Heart right ventricle (tissue), 16 donors: ENCODE measurements at regions of chr16 and their contacts with region 1.

Region 1: DNA sequence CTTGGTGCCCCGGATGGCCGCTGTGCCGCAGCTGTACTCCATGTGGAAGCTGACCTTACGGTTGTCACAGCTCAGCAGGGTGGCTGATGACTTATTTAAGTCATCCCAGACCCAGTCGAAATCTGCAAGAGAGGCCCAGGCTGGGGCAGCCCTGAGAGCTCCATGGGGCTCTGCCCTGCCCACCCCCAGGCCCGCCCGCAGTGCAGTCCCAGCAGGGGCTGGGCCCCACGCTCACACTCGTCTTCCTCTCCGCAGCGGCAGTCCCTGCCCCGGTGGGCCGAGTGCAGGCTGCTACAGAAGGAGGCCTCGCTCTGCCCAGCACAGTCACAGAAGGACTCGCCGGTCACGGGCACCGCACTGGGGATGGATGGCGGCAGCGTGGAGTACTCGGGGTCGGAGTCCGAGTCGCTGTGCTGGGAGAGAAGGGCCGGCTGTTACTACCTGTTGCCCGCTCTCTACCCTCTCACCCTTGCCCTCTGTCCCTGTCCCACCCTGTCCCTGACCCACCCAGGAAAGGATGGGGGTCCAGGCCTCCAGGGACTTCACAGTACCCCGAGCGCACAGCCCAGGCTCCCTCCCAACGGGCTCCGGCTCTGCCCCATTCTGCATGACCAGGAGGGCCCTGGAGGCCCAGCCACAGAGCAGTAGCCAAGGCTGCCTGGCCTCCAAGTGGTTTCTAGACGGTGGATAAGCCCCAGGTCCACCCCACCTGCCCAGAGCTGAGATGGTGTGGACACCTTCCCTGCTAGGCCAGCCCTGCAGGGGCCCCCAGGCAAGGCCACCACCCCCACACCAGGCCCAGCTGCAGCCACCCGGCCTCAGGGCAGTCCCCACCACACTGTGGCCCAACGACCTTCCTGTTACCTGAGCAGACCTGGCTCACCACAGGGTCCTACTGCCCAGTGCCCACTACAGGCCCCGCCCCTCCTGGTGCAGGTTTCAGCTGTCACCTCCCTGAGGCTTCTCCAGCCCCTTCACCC is 3.9 kb downstream of the SPSB3 start:
- DNase-seq: peak in 1 of 2 donors; percentile 13
- ATAC-seq: no peak
- H3K4me3 ChIP-seq: no peak overlapping the region
- H3K27ac ChIP-seq: peak overlapping the region in 1 of 10 donors; percentile 7
- H3K4me1 ChIP-seq: peaks cover 20 to 50% (median 38%) of the 10 kb centered on the region in 9 donors
- H3K27me3 ChIP-seq: no peaks in the 10 kb centered on the region
- CTCF ChIP-seq: no peak

Region 2: GRCh38 chr16:1723450-1724147 is 54.9 kb before region 1 on chr16:
- intact Hi-C with region 1: no loop called
- DNase-seq: no peak
- ATAC-seq: peak in 1 of 8 donors; percentile 45
- H3K4me3 ChIP-seq: no peak overlapping the region
- H3K27ac ChIP-seq: peak overlapping the region in 5 of 10 donors; percentile 5 to 80 (median 29)
- H3K4me1 ChIP-seq: peaks cover 0 to 55% (median 22%) of the 10 kb centered on the region in 9 donors
- H3K27me3 ChIP-seq: no peaks in the 10 kb centered on the region
- CTCF ChIP-seq: peak; percentile 50 to 89 (median 80)

Region 3: GRCh38 chr16:1938316-1938715 is 159.8 kb after region 1 on chr16:
- intact Hi-C with region 1: loop called in 1 of 10 experiments (anchors 5 kb)
- DNase-seq: no peak
- ATAC-seq: no peak
- H3K4me3 ChIP-seq: peak overlapping the region in 1 of 10 donors; percentile 28
- H3K27ac ChIP-seq: peak overlapping the region in 2 of 10 donors; percentile 22 to 82
- H3K4me1 ChIP-seq: peaks cover 8 to 42% (median 13%) of the 10 kb centered on the region in 9 donors
- H3K27me3 ChIP-seq: no peaks in the 10 kb centered on the region
- CTCF ChIP-seq: no peak

Region 4: DNA sequence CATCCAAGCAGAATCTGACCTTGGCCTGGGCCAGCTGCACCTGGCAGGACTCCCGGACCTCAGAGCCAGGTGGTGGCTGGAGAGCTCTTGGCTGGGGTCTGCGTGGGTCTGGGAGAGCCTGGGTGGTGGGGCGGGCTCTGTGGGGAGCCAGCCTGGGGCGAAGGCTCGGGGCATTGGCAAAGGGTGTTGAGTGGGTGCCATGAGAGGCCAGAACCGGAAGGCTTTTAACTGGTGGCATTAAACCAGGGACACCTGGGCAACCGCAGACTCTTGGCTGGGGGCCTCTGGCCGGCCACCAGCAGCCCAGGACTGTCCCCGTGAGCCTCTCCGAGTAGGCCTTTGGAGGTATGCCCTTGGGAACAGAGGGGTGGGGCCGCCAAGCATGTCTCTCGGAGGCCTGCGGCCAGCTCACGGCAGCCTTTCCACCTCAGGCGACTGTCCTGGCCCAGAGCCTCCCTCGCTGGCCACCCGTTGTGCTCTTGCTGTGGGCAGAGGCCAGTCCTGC is 924.8 kb after region 1 on chr16:
- intact Hi-C with region 1: no loop called
- DNase-seq: peak; percentile 62 to 71
- ATAC-seq: peak; percentile 73 to 95 (median 86)
- H3K4me3 ChIP-seq: no peak overlapping the region
- H3K27ac ChIP-seq: peak overlapping the region in 7 of 10 donors; percentile 30 to 68 (median 59)
- H3K4me1 ChIP-seq: peaks cover 0 to 21% (median 11%) of the 10 kb centered on the region in 9 donors
- H3K27me3 ChIP-seq: no peaks in the 10 kb centered on the region
- CTCF ChIP-seq: no peak